ENCODE measurements at regions of chr6 and their contacts with region 1.

Region 1: DNA sequence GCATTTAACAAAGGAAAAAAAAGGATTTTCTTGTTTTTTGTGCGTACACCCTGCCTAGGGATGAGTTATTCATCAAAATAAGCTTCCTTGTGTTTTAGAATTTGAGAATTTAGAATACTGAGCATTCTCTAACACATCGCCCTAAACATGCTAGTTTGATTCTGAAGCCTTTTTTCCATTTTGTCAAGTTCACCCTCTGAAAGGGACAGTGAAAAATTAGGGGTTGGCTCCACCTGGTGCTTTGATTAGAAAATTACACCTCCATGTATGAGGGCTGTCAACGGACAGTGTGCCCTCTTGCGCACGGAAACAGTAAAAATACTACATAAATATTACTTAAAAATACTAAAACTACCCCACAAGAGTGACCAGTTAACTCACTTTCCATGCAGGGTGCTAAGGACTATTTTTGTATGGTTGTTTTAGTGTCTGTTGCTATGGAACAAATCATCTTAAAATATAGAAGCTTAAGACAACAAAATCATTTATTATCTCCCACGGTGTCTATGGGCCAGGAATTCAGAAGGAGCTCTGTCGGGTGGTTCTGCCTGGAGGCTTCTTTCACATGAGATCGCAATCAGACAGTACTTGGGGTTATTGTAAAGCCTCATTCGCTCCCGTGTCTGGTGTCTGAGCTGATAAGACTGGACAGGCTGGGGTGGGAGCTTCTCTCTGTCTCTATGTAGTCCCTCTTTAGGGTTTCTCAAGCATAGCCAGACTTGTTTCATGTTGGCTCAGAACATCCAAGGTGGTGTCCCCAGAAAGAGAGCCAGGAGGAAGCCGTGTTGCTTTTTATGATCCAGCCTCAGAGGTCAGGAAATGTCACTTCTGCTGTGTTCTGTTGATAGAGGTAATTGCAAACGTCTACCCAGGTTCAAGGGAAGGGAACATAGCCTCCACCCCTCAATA is 41.1 kb upstream of the TMEM170B start:
- DNase-seq: no peak
- ATAC-seq: peak; percentile 97

Region 2: GRCh38 chr6:10954590-10955010 is 541.8 kb before region 1 on chr6:
- intact Hi-C with region 1: loop called (anchors 5 kb)
- DNase-seq: peak; percentile 82
- ATAC-seq: peak; percentile 71

Region 3: DNA sequence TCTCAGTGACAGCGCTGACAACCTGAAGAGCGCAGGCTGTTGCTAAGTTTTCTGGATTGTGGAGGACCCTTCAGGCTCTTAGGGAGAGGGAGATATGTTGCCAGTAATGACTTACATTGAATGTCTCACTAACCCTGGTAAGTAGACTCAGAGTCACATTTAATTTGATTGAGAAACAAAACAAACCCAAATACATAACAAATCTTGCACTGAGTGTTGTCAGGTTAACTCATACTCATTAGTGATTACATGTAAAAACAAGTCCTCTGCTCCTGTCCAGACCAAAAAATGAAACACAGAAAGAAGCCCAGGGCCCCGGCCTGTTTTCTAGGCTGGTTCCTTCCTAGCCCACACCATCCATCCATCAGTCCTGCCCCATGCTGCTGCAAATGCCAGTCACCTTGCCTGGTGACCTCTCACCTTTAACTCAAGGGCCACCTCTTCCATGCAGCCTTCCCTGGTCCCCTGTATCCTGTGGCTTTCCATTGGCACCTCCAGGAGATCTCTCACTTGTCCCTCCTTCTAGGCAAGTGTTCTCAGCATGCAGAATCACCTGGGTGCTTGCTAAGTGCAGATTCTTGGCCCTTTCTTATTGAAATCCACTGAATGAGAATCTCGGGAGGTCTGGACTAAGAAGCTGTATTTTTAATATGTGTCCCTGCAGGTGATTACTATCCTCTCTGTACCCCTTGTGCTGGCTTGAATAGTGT is 350.1 kb before region 1 on chr6:
- intact Hi-C with region 1: loop called (anchors 2 kb)
- DNase-seq: no peak
- ATAC-seq: no peak

Region 4: DNA sequence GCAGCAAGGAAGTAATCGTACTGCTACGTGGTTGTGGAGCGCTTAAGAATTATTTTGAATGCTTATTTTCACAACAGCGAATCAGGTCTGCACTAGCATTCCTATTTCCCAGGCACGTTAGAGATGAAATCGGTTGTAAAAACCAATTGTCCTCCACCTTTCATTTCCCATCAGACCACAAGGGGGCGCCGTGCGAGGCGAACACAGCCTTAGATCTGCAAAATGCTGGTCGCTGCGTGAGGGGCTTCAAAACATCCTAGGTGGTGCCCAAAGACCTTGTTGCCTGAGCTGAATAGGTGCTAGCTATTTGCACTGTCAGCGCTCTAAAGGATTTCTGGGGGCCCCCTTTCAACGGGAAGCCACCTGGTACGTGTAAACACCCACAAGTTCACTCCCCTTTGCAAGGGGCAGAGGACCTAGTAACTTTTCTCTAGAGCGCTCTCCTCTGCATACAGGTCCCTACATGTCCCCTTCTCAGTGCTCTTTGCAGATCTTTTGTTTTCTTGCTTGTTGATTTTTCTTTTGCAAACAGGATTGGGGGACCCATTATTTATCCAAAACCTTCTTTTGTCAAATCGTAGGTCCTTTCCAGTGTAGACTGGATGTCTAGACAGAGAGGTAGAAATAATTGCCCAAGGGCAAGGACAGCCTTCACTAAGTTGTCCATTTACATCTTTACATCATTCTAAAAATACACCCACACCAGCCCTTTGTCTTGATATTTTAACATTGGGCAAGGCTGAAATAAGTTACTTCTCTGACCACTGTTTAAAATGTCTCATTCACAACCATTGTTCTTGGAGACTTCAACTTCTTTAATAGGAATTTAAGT is 323.7 kb before region 1 on chr6:
- intact Hi-C with region 1: loop called (anchors 10 kb)
- DNase-seq: peak; percentile 77
- ATAC-seq: peak; percentile 66

Region 5: GRCh38 chr6:11537229-11538051 is 41.0 kb after region 1 on chr6 and contains the start of gene TMEM170B:
- intact Hi-C with region 1: no loop called
- DNase-seq: peak; percentile 96
- ATAC-seq: peak; percentile 98
- total RNA-seq, gene TMEM170B: 4.5 TPM